Activated naive CD8-positive, alpha-beta T cell treated with anti-CD3 and anti-CD28 coated beads, Interleukin-2, amount 10 ng/mL, durations not matched to agents 7 days and 5 days (primary cell): ENCODE measurements at regions of chr7 and their contacts with region 1.

Region 1: DNA sequence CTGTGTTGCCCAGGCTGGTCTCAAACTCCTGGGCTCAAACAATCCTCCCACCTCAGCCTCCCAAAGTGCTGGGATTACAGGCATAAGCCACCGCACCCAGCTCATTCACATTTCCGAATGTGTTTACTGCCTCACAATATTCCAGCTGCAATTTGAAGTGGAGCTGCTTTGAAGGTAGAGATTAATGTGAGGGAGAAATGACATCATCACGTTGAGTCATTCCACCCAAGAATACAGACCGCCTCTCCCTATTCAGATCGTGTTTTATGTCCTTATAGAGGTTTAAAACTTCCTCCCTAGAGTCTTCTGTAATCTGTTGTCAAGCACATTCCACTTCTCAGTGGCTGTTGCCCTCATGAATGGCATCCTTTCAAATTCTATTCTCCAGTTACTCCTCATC is 100.4 kb upstream of the PDGFA start:
- DNase-seq: no peak
- ATAC-seq: no peak
- H3K4me3 Mint-ChIP-seq: peak overlapping the region; percentile 13
- H3K27ac Mint-ChIP-seq: peak overlapping the region; percentile 100
- H3K4me1 Mint-ChIP-seq: peaks cover 39% of the 10 kb centered on the region
- H3K27me3 Mint-ChIP-seq: no peaks in the 10 kb centered on the region

Region 2: DNA sequence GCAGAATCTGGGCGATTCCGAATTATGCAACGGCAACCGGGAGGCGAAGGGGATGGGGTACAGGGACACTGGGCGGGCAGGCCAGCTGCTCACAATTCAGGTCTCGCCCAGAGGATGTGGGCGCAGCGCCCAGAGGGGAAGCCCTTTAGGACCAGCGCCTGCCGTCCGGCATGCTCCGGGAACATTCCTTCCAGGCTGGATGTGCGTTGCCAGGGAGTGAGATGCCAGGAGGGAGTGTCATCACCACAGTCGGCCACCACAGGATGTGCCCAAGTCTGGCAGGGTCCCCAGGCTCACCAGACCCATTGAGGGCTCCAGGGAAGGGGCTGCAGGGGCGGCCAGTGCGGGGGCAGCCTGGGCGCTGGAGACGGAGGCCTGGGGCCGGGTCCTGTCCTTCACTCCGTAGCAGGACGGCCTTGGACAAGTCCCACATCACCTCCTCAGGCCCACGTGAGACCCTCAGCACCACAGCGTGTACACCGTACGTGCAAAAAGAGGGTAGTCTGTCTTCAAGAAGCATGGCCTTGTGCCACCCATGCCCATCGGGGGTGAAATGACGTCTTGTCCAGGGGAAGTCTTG is 266.2 kb before region 1 on chr7:
- POLR2A ChIA-PET with region 1: interaction called, 21 read pairs
- DNase-seq: no peak
- ATAC-seq: no peak
- H3K4me3 Mint-ChIP-seq: no peak overlapping the region
- H3K27ac Mint-ChIP-seq: no peak overlapping the region
- H3K4me1 Mint-ChIP-seq: peaks cover 11% of the 10 kb centered on the region
- H3K27me3 Mint-ChIP-seq: no peaks in the 10 kb centered on the region

Region 3: DNA sequence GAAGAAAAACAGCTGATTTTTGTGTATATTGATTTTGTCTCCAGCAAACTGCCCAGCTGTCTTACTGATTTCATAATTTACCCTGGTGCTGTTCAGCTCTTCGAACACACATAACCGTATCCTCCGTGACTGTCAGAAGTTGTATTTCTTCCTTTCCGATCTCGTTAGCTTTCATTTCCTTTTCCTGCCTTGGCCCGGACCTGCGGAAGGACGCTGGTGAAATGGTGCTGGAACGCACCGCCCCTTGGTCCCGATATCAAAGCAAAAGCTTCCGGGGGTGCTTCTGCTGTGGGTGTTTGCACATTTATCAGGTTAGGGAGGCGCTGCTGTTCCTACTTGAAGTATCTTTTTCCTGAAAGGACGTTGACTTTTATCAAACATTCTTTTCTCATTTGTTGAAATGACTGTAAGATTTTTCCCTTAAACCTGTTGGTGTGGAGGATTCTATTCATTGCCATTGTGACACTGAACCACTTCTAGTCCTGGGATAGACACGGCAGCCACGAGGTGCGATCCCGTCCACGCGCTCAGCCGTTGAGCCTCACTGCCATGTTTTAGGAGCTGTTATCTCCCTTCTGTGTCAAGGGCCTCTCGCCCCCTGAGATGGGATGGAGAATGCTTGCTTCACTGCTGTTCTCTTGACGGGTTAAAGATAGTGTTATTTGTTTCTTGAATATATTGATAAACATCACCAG is 257.5 kb before region 1 on chr7:
- POLR2A ChIA-PET with region 1: interaction called, 14 read pairs
- DNase-seq: peak; percentile 61
- ATAC-seq: peak; percentile 62
- H3K4me3 Mint-ChIP-seq: peak overlapping the region; percentile 84
- H3K27ac Mint-ChIP-seq: peak overlapping the region; percentile 95
- H3K4me1 Mint-ChIP-seq: peaks cover 50% of the 10 kb centered on the region
- H3K27me3 Mint-ChIP-seq: no peaks in the 10 kb centered on the region

Region 4: GRCh38 chr7:584122-584465 is 36.0 kb before region 1 on chr7:
- POLR2A ChIA-PET with region 1: interaction called, 13 read pairs
- DNase-seq: peak; percentile 80
- ATAC-seq: peak; percentile 95
- H3K4me3 Mint-ChIP-seq: peak overlapping the region; percentile 83
- H3K27ac Mint-ChIP-seq: peak overlapping the region; percentile 81
- H3K4me1 Mint-ChIP-seq: peaks cover 30% of the 10 kb centered on the region
- H3K27me3 Mint-ChIP-seq: no peaks in the 10 kb centered on the region

Region 5: GRCh38 chr7:604001-604883 is 15.8 kb before region 1 on chr7:
- POLR2A ChIA-PET with region 1: interaction called, 164 read pairs
- DNase-seq: peak; percentile 92
- ATAC-seq: peak; percentile 86
- H3K4me3 Mint-ChIP-seq: peak overlapping the region; percentile 97
- H3K27ac Mint-ChIP-seq: peak overlapping the region; percentile 100
- H3K4me1 Mint-ChIP-seq: peaks cover 41% of the 10 kb centered on the region
- H3K27me3 Mint-ChIP-seq: no peaks in the 10 kb centered on the region